Activated B cell treated with CpG ODN at 0.5 μM for 24 hours (primary cell): ENCODE measurements at regions of chr19 and their contacts with region 1.

Region 1: DNA sequence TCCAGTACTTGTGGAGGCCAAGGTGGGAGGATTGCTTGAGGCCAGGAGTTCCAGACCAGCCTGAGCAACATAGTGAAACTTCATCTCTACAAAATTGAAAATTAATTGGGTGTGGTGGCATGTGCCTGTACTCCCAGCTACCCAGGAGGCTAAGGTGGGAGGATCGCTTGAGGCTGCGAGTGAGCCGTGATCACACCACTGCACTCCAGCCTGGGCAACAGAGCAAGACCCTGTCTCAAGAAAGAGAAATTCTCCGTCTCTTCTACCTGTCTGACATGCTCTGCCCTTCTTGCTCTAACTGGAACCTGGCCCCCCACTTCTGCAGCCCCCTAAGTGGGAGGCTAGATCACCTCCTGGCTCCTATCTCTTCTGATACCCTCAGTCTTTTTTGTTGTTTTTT is 7.4 kb downstream of the EIF3K start:
- DNase-seq: no peak
- ATAC-seq: no peak
- H3K4me3 Mint-ChIP-seq: no peak overlapping the region
- H3K27ac Mint-ChIP-seq: no peak overlapping the region
- H3K4me1 Mint-ChIP-seq: peaks cover 2% of the 10 kb centered on the region
- H3K27me3 Mint-ChIP-seq: no peaks in the 10 kb centered on the region
- CTCF ChIP-seq: no peak

Region 2: GRCh38 chr19:38606131-38606530 is 20.3 kb before region 1 on chr19:
- CTCF ChIA-PET with region 1: no interaction called
- POLR2A ChIA-PET with region 1: interaction called, 11 read pairs
- intact Hi-C with region 1: no loop called
- DNase-seq: no peak
- ATAC-seq: no peak
- H3K4me3 Mint-ChIP-seq: no peak overlapping the region
- H3K27ac Mint-ChIP-seq: no peak overlapping the region
- H3K4me1 Mint-ChIP-seq: peaks cover under 1% of the 10 kb centered on the region
- H3K27me3 Mint-ChIP-seq: no peaks in the 10 kb centered on the region
- CTCF ChIP-seq: no peak

Region 3: GRCh38 chr19:38658462-38659306 is 32.3 kb after region 1 on chr19:
- CTCF ChIA-PET with region 1: no interaction called
- POLR2A ChIA-PET with region 1: no interaction called
- intact Hi-C with region 1: no loop called
- DNase-seq: no peak
- ATAC-seq: no peak
- H3K4me3 Mint-ChIP-seq: no peak overlapping the region
- H3K27ac Mint-ChIP-seq: peak overlapping the region; percentile 47
- H3K4me1 Mint-ChIP-seq: peaks cover 44% of the 10 kb centered on the region
- H3K27me3 Mint-ChIP-seq: no peaks in the 10 kb centered on the region
- CTCF ChIP-seq: no peak

Region 4: GRCh38 chr19:38917516-38918491 is 291.4 kb after region 1 on chr19:
- CTCF ChIA-PET with region 1: no interaction called
- POLR2A ChIA-PET with region 1: no interaction called
- intact Hi-C with region 1: no loop called
- DNase-seq: no peak
- ATAC-seq: no peak
- H3K4me3 Mint-ChIP-seq: no peak overlapping the region
- H3K27ac Mint-ChIP-seq: no peak overlapping the region
- H3K4me1 Mint-ChIP-seq: no peaks in the 10 kb centered on the region
- H3K27me3 Mint-ChIP-seq: no peaks in the 10 kb centered on the region
- CTCF ChIP-seq: no peak